ENCODE measurements at regions of chr20 and their contacts with region 1.

Region 1: GRCh38 chr20:49676581-49677291 is 36.9 kb downstream of the B4GALT5 start:
- H3K4me3 Mint-ChIP-seq: peak overlapping the region; percentile 42
- H3K27ac Mint-ChIP-seq: peak overlapping the region; percentile 88
- H3K4me1 Mint-ChIP-seq: peaks cover 89% of the 10 kb centered on the region
- H3K27me3 Mint-ChIP-seq: no peaks in the 10 kb centered on the region

Region 2: GRCh38 chr20:49631061-49631788 is 45.5 kb before region 1 on chr20:
- intact Hi-C with region 1: no loop called
- H3K4me3 Mint-ChIP-seq: no peak overlapping the region
- H3K27ac Mint-ChIP-seq: peak overlapping the region; percentile 25
- H3K4me1 Mint-ChIP-seq: peaks cover 13% of the 10 kb centered on the region
- H3K27me3 Mint-ChIP-seq: no peaks in the 10 kb centered on the region

Region 3: GRCh38 chr20:49713753-49714712 is 37.3 kb after region 1 on chr20 and contains the start of gene B4GALT5:
- intact Hi-C with region 1: loop called (anchors 5 kb)
- H3K4me3 Mint-ChIP-seq: peak within 1 kb of the TSS; percentile 85
- H3K27ac Mint-ChIP-seq: peak within 1 kb of the TSS; percentile 85
- H3K4me1 Mint-ChIP-seq: peaks cover 61% of the 10 kb centered on the region
- H3K27me3 Mint-ChIP-seq: no peaks in the 10 kb centered on the region

Region 4: GRCh38 chr20:50027611-50028105 is 350.9 kb after region 1 on chr20:
- intact Hi-C with region 1: no loop called
- H3K4me3 Mint-ChIP-seq: no peak overlapping the region
- H3K27ac Mint-ChIP-seq: no peak overlapping the region
- H3K4me1 Mint-ChIP-seq: peaks cover 41% of the 10 kb centered on the region
- H3K27me3 Mint-ChIP-seq: peaks cover 5% of the 10 kb centered on the region